ENCODE measurements at regions of chr15 and their contacts with region 1.

Region 1: DNA sequence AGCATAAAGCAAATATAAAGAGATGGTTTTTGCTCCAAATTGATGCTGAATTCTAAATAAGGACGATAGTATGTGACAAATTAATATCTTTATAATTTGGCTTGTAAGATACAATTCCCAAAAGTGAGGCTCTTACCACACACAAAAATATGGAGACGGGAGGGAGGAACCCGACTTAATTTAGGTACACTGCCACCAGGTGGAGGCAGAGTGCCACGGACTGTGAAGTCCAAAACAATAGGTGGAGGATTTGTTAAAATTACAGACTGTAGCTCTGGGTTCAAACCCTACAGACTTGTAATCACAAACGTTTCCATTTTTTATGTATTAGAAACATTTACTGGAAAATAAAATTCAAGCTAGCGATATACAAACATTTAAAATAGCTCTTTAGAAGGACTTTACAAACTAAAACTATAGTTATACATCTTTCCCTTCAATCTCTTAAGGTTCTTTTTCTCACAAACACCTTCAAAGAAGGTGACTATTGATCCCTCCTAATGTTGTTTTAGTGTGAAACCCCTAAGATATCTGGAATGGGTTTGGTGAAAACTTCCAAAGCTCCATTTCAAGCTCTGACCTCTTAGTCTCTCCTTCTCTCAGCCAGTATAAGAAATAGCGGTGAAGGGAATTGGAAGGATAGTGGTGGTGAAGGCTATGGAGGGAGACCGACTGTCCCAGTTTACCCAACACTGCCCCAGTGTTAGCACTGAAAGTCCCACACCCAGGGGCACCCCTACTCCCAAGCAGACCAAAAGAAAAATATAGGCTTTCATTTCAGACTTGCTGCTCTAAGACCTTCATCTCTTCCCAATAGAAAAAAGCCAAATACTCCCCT is 89.7 kb downstream of the AQP9 start:
- DNase-seq: peak; percentile 53
- CTCF ChIP-seq: peak; percentile 85

Region 2: DNA sequence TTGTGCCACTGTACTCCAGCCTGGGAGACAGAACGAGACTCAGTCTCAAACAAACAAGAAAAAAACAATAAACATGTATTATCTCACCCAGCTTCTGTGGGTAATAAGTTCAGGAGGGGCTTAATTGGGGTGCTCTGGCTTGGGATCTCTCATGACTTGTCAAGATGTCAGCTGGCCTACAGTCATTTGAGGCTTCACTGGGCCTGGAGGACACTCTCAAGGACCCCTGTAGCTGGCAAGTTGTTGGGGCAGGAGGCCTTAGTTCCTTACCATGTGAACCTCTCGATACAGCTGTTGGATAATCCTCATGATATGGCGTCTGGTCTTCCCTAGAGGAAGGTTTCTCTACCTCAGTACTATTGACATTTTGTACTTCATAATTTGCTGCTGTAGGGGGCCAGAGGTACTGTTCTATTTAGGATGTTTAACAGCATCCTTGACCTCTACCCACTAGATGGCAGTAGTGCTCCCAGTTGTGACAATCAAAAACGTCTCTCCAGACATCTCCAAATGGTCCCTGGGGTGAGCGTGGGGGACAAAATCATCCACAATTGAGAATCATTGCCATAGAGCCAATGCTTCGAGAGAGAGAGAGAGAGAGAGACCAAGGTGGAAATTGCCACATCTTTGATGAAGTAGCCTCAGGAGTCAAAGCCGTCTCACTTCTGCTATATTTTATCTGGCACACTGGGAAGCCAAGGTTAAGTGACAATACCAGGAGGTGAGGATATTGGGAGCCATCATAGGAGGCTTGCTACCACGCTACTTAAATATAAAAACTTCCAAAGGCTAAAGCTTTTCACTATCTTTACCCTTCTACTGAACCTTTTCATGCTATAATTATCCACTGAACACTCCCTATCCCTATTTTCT is 729.4 kb after region 1 on chr15:
- in situ Hi-C with region 1: loop called (anchors 25 kb)
- DNase-seq: peak; percentile 62
- CTCF ChIP-seq: peak; percentile 71

Region 3: DNA sequence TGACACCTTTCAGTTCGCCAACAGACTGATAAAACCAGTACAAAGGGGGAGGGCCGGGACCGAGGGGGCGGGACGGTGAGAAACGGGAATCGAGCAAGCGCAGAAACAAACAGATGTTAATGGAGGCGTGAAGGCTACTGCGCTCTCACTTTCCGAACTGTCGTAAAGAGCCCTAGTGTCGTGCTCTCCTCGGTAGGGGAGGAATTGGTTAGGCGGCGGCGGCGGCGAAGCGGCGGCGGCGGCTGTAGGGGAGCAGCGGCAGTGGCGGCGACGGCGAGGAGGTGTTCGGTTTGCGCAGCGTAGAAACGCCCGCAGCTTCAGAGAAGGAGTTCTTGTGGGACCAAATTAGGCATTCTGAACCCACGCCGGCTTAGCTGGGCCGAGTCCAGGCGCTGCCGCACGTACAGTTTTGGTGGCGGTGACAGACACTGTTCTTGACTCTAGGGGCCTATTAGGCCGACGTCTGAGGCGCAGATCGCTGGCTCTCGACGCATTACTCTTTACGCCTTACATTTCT is 759.6 kb after region 1 on chr15 and contains the start of gene RNF111:
- in situ Hi-C with region 1: no loop called
- DNase-seq: peak; percentile 92
- CTCF ChIP-seq: no peak

Measured in GM13977 (cell line).